Left colon (tissue), 2 donors: ENCODE measurements at regions of chr16 and their contacts with region 1.

Region 1: DNA sequence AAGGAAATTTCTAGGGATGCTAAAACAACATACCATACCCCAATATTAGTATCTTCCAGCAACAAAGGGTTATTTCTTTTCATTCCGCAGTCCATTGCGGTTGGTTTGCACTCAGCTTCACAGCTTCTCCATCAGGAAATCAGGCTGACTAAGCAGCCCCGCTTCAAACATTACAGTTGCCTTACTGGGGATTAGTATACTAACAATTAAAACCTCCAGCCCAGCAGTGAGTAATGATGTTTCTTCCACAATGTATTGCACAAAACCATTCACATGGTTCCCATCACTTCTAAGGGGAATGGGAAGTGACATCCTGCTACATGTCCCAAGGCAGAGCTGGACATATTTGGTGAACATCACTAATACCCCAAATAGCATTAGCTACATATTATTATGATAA is 1384.9 kb downstream of the CDH8 start:
- DNase-seq: no peak
- ATAC-seq: no peak

Region 2: GRCh38 chr16:60605176-60605575 is 46.2 kb before region 1 on chr16:
- intact Hi-C with region 1: loop called in 1 of 2 experiments (anchors 5 kb)
- DNase-seq: no peak
- ATAC-seq: no peak

Region 3: GRCh38 chr16:60731329-60732050 is 80.1 kb after region 1 on chr16:
- intact Hi-C with region 1: no loop called
- DNase-seq: no peak
- ATAC-seq: no peak

Region 4: GRCh38 chr16:60852628-60853027 is 201.3 kb after region 1 on chr16:
- intact Hi-C with region 1: no loop called
- DNase-seq: no peak
- ATAC-seq: no peak